Right ventricle myocardium inferior (tissue), 1 donor: ENCODE measurements at regions of chr3 and their contacts with region 1.

Region 1: DNA sequence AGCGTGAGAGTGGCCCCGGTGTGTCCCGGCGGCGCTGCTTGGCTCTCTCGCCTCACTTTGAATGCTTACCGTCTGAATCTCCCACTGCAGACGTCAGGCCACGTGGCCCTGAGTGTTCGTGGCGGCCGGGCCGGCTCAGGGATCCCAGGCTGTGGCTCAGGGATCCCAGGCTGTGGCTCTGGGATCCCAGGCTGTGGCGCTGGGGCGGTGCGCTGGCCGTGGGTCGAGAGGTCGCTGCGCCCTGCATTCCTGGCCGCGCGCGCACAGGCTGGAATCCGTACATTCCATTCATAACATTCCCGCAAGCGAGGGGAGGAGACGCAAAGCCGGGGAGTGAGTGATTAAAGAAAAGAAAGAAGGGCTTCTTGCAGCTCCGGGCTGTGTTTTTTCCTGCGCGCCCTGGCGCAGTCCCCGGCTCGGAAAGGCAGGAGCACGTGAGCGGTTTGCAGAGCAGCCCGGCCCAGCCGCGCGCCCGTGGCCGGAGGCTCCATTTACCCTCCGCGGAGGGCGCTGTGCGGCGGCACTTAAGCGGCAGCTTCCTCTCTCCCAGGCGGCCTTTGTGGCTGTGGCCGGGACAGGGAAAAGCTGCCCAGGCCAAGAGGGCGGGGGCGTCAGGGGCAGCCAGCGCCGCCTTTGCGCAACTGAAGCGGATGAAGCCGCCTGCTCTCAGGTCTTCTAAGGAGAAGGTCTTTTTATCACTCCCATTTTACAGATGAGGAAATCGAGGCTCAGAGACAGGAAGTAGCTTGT is 87.0 kb upstream of the ALDH1L1 start:
- DNase-seq: peak; percentile 90
- ATAC-seq: peak; percentile 83

Region 2: DNA sequence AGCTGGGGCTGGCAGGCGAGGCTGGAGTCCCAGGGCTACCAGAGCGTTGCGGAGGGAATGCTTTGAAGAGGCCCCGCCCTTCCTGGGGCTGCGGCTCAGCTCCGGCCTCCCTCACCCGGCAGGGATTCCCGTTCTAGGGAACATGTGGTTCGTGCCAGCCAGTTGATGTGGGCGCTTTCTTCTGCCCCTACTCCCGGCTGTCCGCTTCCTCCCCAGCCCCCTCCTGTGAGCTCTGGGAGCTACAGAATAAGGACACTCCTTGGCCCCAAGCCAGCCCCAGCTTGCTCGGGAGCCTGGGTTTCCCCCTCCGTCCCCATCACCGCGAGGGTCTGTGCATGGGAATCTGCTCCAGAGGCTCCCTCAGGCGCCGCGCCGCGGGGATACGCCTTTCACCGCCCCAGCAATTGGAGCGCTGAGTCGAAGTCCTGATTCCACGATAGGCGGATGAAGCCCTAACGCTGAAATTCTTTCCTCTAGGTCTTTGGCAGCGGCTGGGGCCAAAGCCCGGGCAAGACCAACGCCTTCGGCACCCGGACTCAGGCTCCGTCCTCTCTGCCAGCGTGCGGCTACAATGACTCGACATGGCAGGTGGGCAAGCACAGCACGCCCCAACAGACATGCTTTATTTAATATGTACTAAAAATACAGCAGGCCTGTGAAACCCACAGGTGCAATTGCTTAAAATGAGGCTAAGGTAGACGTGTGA is 20.3 kb after region 1 on chr3:
- intact Hi-C with region 1: loop called (anchors 1 kb)
- DNase-seq: peak; percentile 81
- ATAC-seq: peak; percentile 90

Region 3: DNA sequence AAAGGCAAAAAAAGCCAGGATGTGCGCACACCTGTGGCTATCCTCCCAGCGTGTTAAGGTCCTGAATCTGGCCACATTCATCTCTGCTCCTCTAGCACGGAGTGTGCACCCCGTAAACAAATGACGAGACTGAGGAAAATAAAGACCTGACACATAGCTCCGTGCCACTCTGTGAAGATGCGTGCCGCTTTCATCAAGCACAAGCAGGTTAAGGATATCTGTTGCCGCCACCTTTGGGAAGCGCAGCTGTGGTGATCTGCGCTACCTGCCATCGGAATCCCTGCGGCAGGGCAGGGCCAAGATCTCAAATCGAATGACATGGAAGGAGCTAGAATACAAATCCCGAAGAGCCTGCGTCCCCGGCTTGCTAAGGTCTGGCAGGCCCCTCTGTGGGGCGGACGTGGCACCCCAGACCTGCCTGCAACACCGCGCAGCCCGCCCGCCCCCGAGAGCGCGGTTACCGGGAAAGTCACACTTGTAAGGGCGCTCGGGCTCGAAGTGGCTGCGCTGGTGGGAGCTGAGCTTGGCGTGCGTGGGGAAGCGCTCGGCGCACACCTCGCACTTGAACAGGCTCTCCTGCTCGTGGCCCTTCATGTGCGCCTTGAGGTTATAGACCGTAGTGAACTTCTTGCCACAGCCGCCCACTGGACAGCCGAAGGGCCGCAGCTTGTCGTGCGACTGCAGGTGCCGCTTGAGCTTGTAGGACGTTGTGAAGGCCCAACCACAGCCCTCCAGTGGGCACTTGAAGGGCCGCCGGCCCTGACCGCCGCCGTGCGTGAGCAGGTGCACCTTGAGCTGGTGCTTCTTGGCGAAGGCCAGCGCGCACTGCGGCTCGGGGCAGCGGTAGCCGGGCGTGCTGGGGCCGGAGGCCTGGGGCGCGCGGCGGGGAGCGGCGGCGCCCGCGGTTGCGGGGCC is 207.4 kb after region 1 on chr3:
- intact Hi-C with region 1: loop called (anchors 5 kb)
- DNase-seq: peak; percentile 75
- ATAC-seq: no peak